ENCODE measurements at regions of chr12 and their contacts with region 1.

Region 1: GRCh38 chr12:121668750-121669520 is 519 bp downstream of the MORN3 start:
- DNase-seq: peak; percentile 77
- H3K4me3 Mint-ChIP-seq: no peak overlapping the region
- H3K27ac Mint-ChIP-seq: peak overlapping the region; percentile 75
- H3K4me1 Mint-ChIP-seq: peaks cover 79% of the 10 kb centered on the region
- H3K27me3 Mint-ChIP-seq: no peaks in the 10 kb centered on the region

Region 2: DNA sequence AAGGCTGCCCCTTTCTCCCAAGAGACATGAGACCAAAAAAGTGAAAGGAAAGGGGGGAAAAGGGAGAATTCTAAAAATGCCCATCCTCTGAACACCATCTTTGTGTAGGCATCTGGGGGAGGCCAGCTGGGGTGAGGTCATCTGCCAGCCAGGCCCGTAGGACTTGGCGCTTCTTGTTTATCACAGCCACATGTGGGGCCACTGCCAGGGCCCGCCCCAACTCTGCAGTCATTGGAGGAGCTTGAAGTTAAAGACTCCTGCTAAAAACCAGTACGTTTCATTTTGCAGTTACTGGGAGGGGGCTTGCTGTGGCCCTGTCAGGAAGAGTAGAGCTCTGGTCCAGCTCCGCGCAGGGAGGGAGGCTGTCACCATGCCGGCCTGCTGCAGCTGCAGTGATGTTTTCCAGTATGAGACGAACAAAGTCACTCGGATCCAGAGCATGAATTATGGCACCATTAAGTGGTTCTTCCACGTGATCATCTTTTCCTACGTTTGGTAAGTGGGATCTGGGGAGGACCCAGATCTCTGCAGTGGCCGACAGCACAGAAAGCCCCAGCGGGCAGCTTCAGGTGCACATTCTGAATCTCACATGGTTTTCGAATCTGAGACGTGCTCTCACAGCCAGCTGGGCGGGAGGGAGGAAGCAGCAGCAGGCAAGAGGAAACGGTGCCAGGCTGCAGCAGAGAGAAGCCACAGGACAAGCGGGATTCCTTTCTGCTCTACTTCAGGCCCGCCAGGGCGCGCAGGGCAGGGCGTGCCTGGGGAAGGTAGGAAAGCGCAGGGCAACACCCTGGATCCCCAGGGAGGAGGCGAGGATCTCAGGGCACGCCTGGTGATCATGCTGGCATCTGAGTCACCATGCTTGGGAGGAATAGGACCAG is 536.1 kb before region 1 on chr12 and contains the start of gene P2RX7:
- CTCF ChIA-PET with region 1: no interaction called
- DNase-seq: peak; percentile 74
- H3K4me3 Mint-ChIP-seq: peak within 1 kb of the TSS; percentile 90
- H3K27ac Mint-ChIP-seq: peak within 1 kb of the TSS; percentile 99
- H3K4me1 Mint-ChIP-seq: peaks cover 74% of the 10 kb centered on the region
- H3K27me3 Mint-ChIP-seq: no peaks in the 10 kb centered on the region

Region 3: DNA sequence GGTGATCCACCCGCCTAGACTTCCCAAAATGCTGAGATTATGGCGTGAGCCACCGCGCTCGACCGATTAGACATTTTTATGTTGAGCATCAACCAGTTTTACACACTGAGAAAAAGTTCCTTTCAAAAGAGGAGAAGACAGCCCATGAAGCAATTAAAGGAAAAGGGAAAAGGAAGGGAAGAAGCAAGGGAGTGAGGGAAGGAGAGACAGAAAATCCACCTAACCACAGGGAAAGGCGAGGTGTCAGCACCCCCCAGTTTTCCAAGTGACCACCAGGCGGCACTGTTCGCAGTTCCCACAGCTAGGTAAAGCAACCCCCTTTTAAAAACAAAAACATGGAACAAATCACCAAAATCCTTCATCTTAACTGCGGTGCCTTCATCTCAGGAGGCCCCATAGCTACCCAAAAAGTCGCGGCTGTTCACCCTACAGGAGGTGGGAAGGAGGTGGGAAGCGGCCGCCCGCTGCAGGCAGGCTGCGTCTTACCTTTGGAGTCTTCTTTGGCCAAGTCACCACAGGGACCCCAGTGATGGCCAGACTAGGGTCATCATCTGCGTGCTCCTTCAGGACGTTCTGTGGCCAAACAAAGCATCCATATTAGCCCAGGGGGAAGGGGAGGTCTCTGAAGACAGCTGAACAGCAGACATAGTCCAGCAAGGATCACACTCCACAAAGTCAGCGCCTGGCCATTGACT is 174.7 kb before region 1 on chr12:
- CTCF ChIA-PET with region 1: interaction called, 18 read pairs
- DNase-seq: peak; percentile 74
- H3K4me3 Mint-ChIP-seq: no peak overlapping the region
- H3K27ac Mint-ChIP-seq: no peak overlapping the region
- H3K4me1 Mint-ChIP-seq: peaks cover 16% of the 10 kb centered on the region
- H3K27me3 Mint-ChIP-seq: no peaks in the 10 kb centered on the region

Region 4: DNA sequence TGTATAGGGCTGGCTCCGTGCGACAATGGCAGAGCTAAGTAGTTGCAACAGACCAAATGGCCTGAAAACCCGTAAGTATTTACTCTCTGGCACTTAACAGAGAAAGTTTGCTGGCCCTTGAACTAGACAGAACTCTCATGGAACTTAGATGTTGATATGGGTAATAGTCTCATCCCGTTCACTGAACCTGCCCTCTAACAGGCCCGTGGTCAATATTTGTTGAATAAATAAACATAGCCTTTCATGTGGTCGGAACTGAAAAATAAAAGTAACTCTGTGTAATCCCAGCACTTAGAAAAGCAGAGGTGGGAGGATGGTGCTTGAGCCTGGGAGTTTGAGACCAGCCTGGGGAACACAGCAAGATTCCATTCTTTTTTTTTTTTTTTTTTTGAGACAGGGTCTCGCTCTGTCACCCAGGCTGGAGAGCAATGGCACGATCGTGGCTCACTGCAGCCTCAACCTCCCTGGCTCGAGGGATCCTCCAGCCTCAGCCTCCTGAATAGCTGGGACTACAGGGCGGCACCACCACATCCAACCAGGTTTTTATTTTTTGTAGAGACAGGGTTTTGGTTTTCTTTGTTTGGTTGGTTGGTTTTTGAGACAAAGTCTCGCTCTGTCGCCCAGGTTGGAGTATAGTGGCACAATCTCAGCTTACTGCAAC is 117.8 kb before region 1 on chr12:
- CTCF ChIA-PET with region 1: interaction called, 75 read pairs
- DNase-seq: no peak
- H3K4me3 Mint-ChIP-seq: no peak overlapping the region
- H3K27ac Mint-ChIP-seq: no peak overlapping the region
- H3K4me1 Mint-ChIP-seq: peaks cover 23% of the 10 kb centered on the region
- H3K27me3 Mint-ChIP-seq: no peaks in the 10 kb centered on the region

Region 5: GRCh38 chr12:121632069-121632970 is 36.6 kb before region 1 on chr12:
- CTCF ChIA-PET with region 1: interaction called, 96 read pairs
- DNase-seq: no peak
- H3K4me3 Mint-ChIP-seq: peak overlapping the region; percentile 37
- H3K27ac Mint-ChIP-seq: peak overlapping the region; percentile 77
- H3K4me1 Mint-ChIP-seq: peaks cover 81% of the 10 kb centered on the region
- H3K27me3 Mint-ChIP-seq: no peaks in the 10 kb centered on the region

Region 6: GRCh38 chr12:121649819-121650353 is 19.0 kb before region 1 on chr12:
- CTCF ChIA-PET with region 1: interaction called, 17 read pairs
- DNase-seq: peak; percentile 35
- H3K4me3 Mint-ChIP-seq: no peak overlapping the region
- H3K27ac Mint-ChIP-seq: peak overlapping the region; percentile 69
- H3K4me1 Mint-ChIP-seq: peaks cover 52% of the 10 kb centered on the region
- H3K27me3 Mint-ChIP-seq: no peaks in the 10 kb centered on the region

Measured in activated naive CD4-positive, alpha-beta T cell treated with anti-CD3 and anti-CD28 coated beads, Interleukin-2, amount 10 ng/mL, durations not matched to agents 7 days and 5 days (primary cell).